ENCODE measurements at regions of chr2 and their contacts with region 1.

Region 1: DNA sequence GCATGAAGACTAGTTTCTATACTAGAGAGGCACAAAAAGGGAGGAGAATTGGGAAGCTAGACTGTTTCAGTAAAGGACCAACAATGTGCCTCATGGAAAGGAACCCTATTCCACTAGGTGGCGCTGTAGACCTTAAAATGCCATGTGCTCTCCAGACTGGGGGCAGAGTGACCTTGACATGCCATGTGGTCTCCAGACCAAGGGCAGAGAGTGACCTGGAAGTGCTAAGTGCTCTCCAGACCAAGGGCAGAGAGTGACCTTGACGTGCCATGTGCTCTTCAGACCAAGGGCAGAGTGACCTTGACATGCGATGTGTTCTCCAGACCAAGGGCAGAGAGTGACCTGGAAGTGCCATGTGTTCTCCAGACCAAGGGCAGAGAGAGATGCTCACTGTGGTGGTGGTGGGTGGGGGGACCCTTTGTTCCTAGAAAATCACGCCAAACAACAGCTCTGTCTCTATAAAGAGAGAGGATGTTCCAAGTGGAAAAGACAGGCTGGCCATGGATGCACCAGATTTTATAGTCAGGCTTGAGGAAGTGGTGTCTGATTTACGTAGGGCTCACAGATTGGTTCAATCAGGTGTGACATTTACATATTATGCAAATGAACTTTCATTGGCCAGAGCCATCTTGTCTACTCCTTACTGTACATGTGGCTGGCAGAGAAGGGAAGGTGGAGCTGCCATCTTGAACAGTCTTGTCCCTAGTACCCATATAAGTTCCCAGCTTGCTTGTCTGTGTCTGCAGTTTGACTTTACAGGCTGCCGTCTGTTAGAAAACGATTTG is 344.0 kb upstream of the DDX18 start:
- DNase-seq: peak; percentile 63
- H3K4me3 ChIP-seq: no peak overlapping the region
- H3K27ac ChIP-seq: no peak overlapping the region
- H3K4me1 ChIP-seq: no peaks in the 10 kb centered on the region
- CTCF ChIP-seq: peak; percentile 86

Region 2: GRCh38 chr2:117771969-117772630 is 301.6 kb after region 1 on chr2:
- CTCF ChIA-PET with region 1: no interaction called
- POLR2A ChIA-PET with region 1: no interaction called
- intact Hi-C with region 1: loop called (anchors 2 kb)
- DNase-seq: peak; percentile 29
- H3K4me3 ChIP-seq: no peak overlapping the region
- H3K27ac ChIP-seq: no peak overlapping the region
- H3K4me1 ChIP-seq: no peaks in the 10 kb centered on the region
- CTCF ChIP-seq: peak; percentile 78

Region 3: DNA sequence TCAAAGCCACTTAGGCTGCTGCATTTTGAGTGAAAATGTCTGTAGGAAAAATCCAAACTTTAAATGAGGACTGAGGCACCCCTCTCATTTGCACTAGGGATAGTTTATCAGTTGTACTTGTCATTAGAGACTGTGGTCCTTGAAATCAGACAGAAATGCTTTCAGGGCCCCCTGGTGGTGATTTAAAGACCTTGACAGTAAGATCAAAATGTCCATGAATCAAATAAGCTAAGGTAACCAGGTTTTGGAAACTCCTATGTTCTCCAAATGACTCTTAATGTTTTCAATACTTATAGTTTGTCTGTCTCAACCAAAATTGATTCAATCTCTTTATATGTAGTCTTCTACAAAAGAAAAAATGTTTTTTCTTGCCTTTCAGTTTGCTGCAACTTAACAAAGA is 315.2 kb after region 1 on chr2:
- CTCF ChIA-PET with region 1: no interaction called
- POLR2A ChIA-PET with region 1: no interaction called
- intact Hi-C with region 1: loop called (anchors 2 kb)
- DNase-seq: peak; percentile 73
- H3K4me3 ChIP-seq: no peak overlapping the region
- H3K27ac ChIP-seq: no peak overlapping the region
- H3K4me1 ChIP-seq: no peaks in the 10 kb centered on the region
- CTCF ChIP-seq: peak; percentile 87

Region 4: DNA sequence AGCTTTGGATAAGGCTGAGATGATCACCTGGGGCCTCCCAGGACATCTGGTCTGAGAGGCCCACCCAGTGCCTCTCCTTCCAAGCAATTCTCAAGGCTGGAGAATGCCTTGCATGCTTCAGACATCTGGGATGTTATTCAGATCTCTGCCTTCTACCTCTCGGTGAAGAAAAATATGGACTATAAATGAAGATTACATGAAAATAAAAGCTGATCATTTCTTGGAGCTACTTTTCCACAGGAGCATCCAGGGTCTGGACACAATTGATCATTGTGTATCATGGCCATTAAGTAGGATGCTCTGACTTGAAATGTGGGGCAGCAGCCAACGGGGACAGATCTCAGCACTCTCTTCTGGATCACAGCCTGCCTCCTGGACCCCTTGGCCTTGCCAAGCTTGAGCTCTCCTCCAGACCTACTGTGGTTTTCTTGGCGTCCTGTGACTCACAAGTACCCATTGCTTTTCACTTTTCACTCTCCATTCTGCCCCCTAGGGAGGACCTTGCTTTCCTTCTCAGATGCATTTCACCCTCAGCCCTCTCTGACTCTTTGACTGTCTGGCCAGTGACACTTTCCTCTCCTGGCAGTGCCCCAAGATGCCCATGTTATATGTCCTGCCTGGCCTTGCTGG is 820.9 kb after region 1 on chr2:
- CTCF ChIA-PET with region 1: no interaction called
- POLR2A ChIA-PET with region 1: no interaction called
- intact Hi-C with region 1: no loop called
- DNase-seq: no peak
- H3K4me3 ChIP-seq: no peak overlapping the region
- H3K27ac ChIP-seq: no peak overlapping the region
- H3K4me1 ChIP-seq: no peaks in the 10 kb centered on the region
- CTCF ChIP-seq: no peak

Measured in OCI-LY7 (cell line).